ENCODE measurements at regions of chr20 and their contacts with region 1.

Region 1: DNA sequence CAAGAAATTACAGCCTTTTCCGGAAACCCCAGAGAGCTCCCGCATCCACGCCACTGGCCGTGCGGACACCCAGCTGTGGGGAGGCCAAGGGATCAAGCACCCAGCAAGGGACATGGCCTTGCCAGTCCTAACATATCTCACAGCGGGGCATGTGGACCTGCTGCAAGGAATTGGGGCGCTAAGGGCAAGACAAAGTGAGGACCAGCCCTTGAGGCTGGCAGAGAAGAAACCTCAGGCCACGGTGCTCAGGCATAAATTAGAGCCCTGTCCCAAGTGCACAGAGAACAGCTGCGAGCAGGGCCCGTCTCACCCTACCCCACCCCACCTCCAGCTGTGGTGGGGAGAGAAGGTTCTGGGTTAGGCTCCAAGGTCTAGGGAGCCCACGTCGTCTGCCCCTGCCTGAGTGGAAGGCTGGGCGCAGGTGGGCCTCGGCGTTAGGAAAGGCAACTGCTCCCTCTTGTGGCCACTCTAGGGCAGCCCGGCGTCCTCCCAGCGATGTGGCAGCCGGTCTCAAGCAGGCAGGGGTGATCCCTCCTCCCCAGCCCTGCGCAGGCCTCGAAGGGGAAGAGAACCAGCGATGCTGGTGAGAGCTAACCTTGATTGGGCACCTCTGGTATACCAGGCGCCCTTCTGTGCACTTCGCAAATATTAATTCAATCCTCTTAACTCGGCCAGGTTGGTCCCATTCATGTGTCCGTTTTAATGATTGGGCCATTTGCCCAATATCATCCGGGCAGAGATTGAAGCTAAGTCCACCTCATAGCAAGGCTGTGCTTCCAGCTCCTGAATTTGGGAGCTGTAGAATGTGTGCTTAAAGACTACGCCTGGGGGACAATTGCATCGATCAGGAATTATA is 235.8 kb downstream of the NFATC2 start:
- DNase-seq: peak; percentile 78
- H3K4me3 ChIP-seq: no peak overlapping the region
- H3K27ac ChIP-seq: no peak overlapping the region
- H3K4me1 ChIP-seq: no peaks in the 10 kb centered on the region
- H3K27me3 ChIP-seq: no peaks in the 10 kb centered on the region
- CTCF ChIP-seq: peak; percentile 96

Region 2: GRCh38 chr20:51220293-51220706 is 86.4 kb before region 1 on chr20:
- CTCF ChIA-PET with region 1: no interaction called
- POLR2A ChIA-PET with region 1: no interaction called
- intact Hi-C with region 1: loop called (anchors 5 kb)
- DNase-seq: peak; percentile 52
- H3K4me3 ChIP-seq: no peak overlapping the region
- H3K27ac ChIP-seq: no peak overlapping the region
- H3K4me1 ChIP-seq: peaks cover 5% of the 10 kb centered on the region
- H3K27me3 ChIP-seq: no peaks in the 10 kb centered on the region
- CTCF ChIP-seq: peak; percentile 98

Region 3: DNA sequence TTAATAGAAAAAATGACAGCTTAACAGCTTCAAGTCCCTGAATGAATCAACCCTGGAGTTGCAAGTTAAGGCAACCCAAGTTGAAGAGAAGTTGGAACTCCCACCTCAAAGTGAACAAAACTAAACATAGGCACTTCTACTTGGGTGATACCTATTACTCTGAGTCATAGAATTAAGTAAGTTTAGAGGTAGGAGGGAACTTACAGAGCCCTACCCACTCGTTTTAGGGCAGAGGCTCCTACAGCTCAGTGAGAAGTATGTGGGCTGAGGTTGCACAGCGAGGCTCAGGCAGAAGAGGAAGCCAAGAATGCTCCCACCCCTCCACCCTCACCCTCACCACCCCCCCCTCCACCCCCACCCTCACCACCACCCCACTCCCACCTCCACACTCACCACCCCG is 193.6 kb after region 1 on chr20:
- CTCF ChIA-PET with region 1: no interaction called
- POLR2A ChIA-PET with region 1: no interaction called
- intact Hi-C with region 1: no loop called
- DNase-seq: peak; percentile 26
- H3K4me3 ChIP-seq: no peak overlapping the region
- H3K27ac ChIP-seq: peak overlapping the region; percentile 24
- H3K4me1 ChIP-seq: peaks cover 31% of the 10 kb centered on the region
- H3K27me3 ChIP-seq: no peaks in the 10 kb centered on the region
- CTCF ChIP-seq: no peak

Region 4: DNA sequence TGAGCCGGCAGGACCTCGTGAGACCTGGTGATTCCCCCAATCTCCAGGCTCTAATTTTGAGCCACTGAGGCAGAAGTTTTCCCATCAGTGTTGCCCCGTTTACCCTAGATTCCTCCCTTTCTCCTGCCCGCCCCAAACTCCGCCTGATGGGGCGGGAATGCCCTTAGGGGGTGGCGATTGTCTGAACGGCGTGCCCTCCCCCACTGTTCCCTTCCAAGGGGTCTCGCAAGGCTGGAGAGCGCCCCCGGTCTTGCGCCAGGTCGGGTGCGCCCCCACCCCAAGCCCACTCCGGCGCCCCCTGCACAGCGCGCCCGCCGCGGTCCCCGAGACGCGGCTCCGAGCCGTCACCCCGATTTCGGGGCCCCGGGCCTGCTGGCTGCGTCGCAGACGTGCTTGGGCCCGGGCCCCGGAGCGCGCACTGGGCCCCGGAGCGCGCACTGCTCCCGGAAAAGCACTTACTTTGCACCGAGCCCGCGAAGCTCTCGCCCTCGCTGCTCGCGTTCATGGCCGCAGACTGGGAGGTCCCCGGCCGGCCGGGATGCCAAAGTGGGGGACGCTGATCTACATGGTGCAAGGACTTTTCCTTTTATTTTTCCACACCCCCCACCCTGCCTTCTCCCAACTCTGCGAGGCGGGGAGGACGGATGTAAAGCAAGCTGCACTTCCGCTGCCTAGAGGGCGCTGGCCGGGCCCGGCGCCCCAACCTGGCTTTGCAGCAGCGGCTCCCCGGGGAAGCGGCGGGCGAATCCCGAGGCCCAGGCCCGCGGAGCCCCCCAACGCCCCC is 884.6 kb after region 1 on chr20 and contains the start of gene ZFP64:
- CTCF ChIA-PET with region 1: no interaction called
- POLR2A ChIA-PET with region 1: no interaction called
- intact Hi-C with region 1: no loop called
- DNase-seq: peak; percentile 87
- H3K4me3 ChIP-seq: peak within 1 kb of the TSS; percentile 88
- H3K27ac ChIP-seq: peak within 1 kb of the TSS; percentile 90
- H3K4me1 ChIP-seq: peaks cover 15% of the 10 kb centered on the region
- H3K27me3 ChIP-seq: no peaks in the 10 kb centered on the region
- CTCF ChIP-seq: peak; percentile 71
- total RNA-seq, gene ZFP64: 33.5 and 34.9 TPM in 2 replicates

Measured in A673 (cell line).